Dorsolateral prefrontal cortex (tissue), 120 donors: ENCODE measurements at regions of chr12 and their contacts with region 1.

Region 1: GRCh38 chr12:133135747-133136146 is 5.3 kb downstream of the ZNF10 start:
- DNase-seq: no peak
- H3K4me3 ChIP-seq: no peak overlapping the region
- H3K27ac ChIP-seq: no peak overlapping the region
- H3K27me3 ChIP-seq: no peaks in the 10 kb centered on the region
- CTCF ChIP-seq: no peak

Region 2: GRCh38 chr12:133172491-133172890 is 36.7 kb after region 1 on chr12:
- intact Hi-C with region 1: loop called in 1 of 2 experiments (anchors 5 kb)
- DNase-seq: no peak
- H3K4me3 ChIP-seq: no peak overlapping the region
- H3K27ac ChIP-seq: no peak overlapping the region
- H3K27me3 ChIP-seq: no peaks in the 10 kb centered on the region
- CTCF ChIP-seq: no peak

Region 3: DNA sequence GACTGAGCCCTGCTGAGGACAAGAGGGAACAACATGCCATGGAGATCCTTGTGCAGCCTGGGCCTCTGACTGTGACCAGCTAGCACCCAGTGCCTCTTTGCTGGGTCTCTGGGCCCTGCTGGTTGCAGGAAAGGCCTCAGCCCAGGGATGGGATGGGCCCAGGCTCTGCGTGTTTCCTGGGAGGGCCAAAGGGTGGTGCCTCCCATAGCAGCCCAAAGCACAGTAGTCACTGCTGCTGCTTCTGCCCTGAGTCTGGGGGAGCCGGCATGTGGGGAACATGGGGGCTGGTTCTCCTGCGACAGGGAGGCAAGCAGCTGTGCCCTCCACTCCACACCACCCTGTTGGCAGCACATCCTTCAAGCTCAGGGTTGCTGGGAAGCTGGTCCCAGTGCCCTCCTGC is 81.5 kb after region 1 on chr12:
- intact Hi-C with region 1: no loop called
- DNase-seq: no peak
- H3K4me3 ChIP-seq: no peak overlapping the region
- H3K27ac ChIP-seq: no peak overlapping the region
- H3K27me3 ChIP-seq: no peaks in the 10 kb centered on the region
- CTCF ChIP-seq: no peak